PC-3 (cell line): ENCODE measurements at regions of chr12 and their contacts with region 1.

Region 1: GRCh38 chr12:76020731-76021672 is 10.6 kb downstream of the PHLDA1 start:
- DNase-seq: peak; percentile 97
- ATAC-seq: peak; percentile 59
- H3K4me3 ChIP-seq: peak overlapping the region; percentile 54
- H3K27ac ChIP-seq: peak overlapping the region; percentile 96
- H3K4me1 ChIP-seq: peaks cover 63% of the 10 kb centered on the region
- H3K27me3 ChIP-seq: no peaks in the 10 kb centered on the region
- CTCF ChIP-seq: no peak

Region 2: DNA sequence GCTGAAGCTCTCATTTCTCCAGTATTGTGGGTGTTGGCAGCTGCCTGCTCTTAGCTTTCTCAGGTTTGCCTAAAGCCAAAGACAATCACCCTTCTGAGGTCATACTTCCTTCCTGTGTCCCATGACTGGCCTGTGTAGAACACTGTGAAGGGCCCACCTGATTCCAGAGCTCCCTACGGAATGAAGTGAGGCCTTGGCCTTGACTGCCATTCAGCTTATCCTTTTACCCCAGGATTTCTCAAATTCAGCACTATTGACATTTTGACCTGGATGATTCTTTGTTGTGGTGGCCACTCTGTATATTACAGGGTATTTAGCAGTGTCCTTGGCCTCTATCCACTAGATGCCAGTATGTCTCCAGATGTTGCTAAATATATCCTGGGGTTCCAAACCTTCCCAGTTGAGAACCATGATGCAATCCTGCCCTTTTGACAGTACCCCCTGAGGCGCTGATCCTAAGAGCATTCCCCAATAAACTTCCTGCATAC is 397.3 kb before region 1 on chr12:
- CTCF ChIA-PET with region 1: interaction called, 7 read pairs
- POLR2A ChIA-PET with region 1: no interaction called
- intact Hi-C with region 1: loop called (anchors 5 kb)
- DNase-seq: peak; percentile 54
- ATAC-seq: peak; percentile 84
- H3K4me3 ChIP-seq: no peak overlapping the region
- H3K27ac ChIP-seq: no peak overlapping the region
- H3K4me1 ChIP-seq: peaks cover 10% of the 10 kb centered on the region; the same call in 1 of the 2 replicates
- H3K27me3 ChIP-seq: no peaks in the 10 kb centered on the region
- CTCF ChIP-seq: peak; percentile 62

Region 3: GRCh38 chr12:75722714-75723200 is 298.2 kb before region 1 on chr12:
- CTCF ChIA-PET with region 1: no interaction called
- POLR2A ChIA-PET with region 1: no interaction called
- intact Hi-C with region 1: loop called (anchors 5 kb)
- DNase-seq: peak; percentile 88
- ATAC-seq: peak; percentile 37
- H3K4me3 ChIP-seq: no peak overlapping the region
- H3K27ac ChIP-seq: peak overlapping the region; percentile 75
- H3K4me1 ChIP-seq: peaks cover 55% of the 10 kb centered on the region
- H3K27me3 ChIP-seq: no peaks in the 10 kb centered on the region
- CTCF ChIP-seq: no peak

Region 4: GRCh38 chr12:75825686-75826085 is 195.3 kb before region 1 on chr12:
- CTCF ChIA-PET with region 1: no interaction called
- POLR2A ChIA-PET with region 1: no interaction called
- intact Hi-C with region 1: loop called (anchors 2 kb)
- DNase-seq: peak; percentile 96
- ATAC-seq: peak; percentile 92
- H3K4me3 ChIP-seq: no peak overlapping the region; the same call in 1 of the 2 replicates
- H3K27ac ChIP-seq: peak overlapping the region; percentile 97
- H3K4me1 ChIP-seq: peaks cover 37% of the 10 kb centered on the region
- H3K27me3 ChIP-seq: no peaks in the 10 kb centered on the region
- CTCF ChIP-seq: no peak

Region 5: GRCh38 chr12:75944097-75944904 is 76.7 kb before region 1 on chr12:
- CTCF ChIA-PET with region 1: no interaction called
- POLR2A ChIA-PET with region 1: no interaction called
- intact Hi-C with region 1: loop called (anchors 1 kb)
- DNase-seq: peak; percentile 96
- ATAC-seq: peak; percentile 86
- H3K4me3 ChIP-seq: peak overlapping the region; percentile 23; the same call in 1 of the 2 replicates
- H3K27ac ChIP-seq: peak overlapping the region; percentile 98
- H3K4me1 ChIP-seq: peaks cover 23% of the 10 kb centered on the region
- H3K27me3 ChIP-seq: no peaks in the 10 kb centered on the region
- CTCF ChIP-seq: no peak

Region 6: GRCh38 chr12:75977952-75978671 is 42.9 kb before region 1 on chr12:
- CTCF ChIA-PET with region 1: interaction called, 3 read pairs
- POLR2A ChIA-PET with region 1: interaction called, 5 read pairs
- intact Hi-C with region 1: loop called (anchors 1 kb)
- DNase-seq: peak; percentile 99
- ATAC-seq: peak; percentile 78
- H3K4me3 ChIP-seq: peak overlapping the region; percentile 25; the same call in 1 of the 2 replicates
- H3K27ac ChIP-seq: peak overlapping the region; percentile 99
- H3K4me1 ChIP-seq: peaks cover 45% of the 10 kb centered on the region
- H3K27me3 ChIP-seq: no peaks in the 10 kb centered on the region
- CTCF ChIP-seq: no peak

Region 7: GRCh38 chr12:75990189-75990912 is 30.7 kb before region 1 on chr12:
- CTCF ChIA-PET with region 1: no interaction called
- POLR2A ChIA-PET with region 1: no interaction called
- intact Hi-C with region 1: no loop called
- DNase-seq: no peak
- ATAC-seq: no peak
- H3K4me3 ChIP-seq: no peak overlapping the region
- H3K27ac ChIP-seq: no peak overlapping the region
- H3K4me1 ChIP-seq: peaks cover 24% of the 10 kb centered on the region; the same call in 1 of the 2 replicates
- H3K27me3 ChIP-seq: no peaks in the 10 kb centered on the region
- CTCF ChIP-seq: no peak

Region 8: GRCh38 chr12:76455582-76456345 is 434.8 kb after region 1 on chr12:
- CTCF ChIA-PET with region 1: no interaction called
- POLR2A ChIA-PET with region 1: interaction called, 12 read pairs
- intact Hi-C with region 1: no loop called
- DNase-seq: peak; percentile 95
- ATAC-seq: peak; percentile 89
- H3K4me3 ChIP-seq: 0 out of 2 replicates have a peak overlapping the region, but pooled peaks have one; percentile 19
- H3K27ac ChIP-seq: peak overlapping the region; percentile 52
- H3K4me1 ChIP-seq: peaks cover 31% of the 10 kb centered on the region
- H3K27me3 ChIP-seq: no peaks in the 10 kb centered on the region
- CTCF ChIP-seq: peak; percentile 90